ENCODE measurements at regions of chr10 and their contacts with region 1.

Region 1: GRCh38 chr10:21989453-21990154 is 13.9 kb downstream of the DNAJC1 start:
- DNase-seq: peak; percentile 52
- ATAC-seq: peak; percentile 99
- H3K4me3 ChIP-seq: no peak overlapping the region
- H3K27ac ChIP-seq: no peak overlapping the region
- H3K4me1 ChIP-seq: no peaks in the 10 kb centered on the region
- H3K27me3 ChIP-seq: no peaks in the 10 kb centered on the region
- CTCF ChIP-seq: peak; percentile 50 to 71 (median 71); a peak in 5 of 6 replicates
- POLR2A ChIP-seq: no peak
- RAD21 ChIP-seq: peak; percentile 69

Region 2: GRCh38 chr10:21488246-21488956 is 501.2 kb before region 1 on chr10:
- CTCF ChIA-PET with region 1: no interaction called
- POLR2A ChIA-PET with region 1: no interaction called
- RAD21 ChIA-PET with region 1: no interaction called
- intact Hi-C with region 1: no loop called
- DNase-seq: no peak
- ATAC-seq: no peak
- H3K4me3 ChIP-seq: no peak overlapping the region
- H3K27ac ChIP-seq: no peak overlapping the region
- H3K4me1 ChIP-seq: no peaks in the 10 kb centered on the region
- H3K27me3 ChIP-seq: no peaks in the 10 kb centered on the region
- CTCF ChIP-seq: no peak
- POLR2A ChIP-seq: no peak
- RAD21 ChIP-seq: no peak

Region 3: DNA sequence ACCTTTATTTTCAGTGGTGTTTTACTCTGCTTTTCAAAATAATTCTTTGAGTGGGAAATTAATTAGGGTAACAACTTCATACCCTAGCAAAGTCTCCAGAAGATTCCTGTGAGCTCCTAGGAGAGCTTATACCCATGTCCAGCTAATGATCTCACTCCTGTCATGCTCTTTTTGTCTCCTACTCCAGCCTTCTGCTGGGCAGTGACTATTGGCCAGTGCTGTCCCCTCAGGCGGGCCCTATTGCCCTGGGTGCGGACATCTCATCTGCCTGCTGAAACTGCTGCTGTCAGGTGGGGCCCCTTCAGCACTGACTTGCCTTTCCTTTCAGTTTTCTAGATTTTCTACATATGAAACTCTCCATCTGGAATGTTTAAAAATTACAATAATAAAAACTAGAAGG is 147.9 kb after region 1 on chr10:
- CTCF ChIA-PET with region 1: no interaction called
- POLR2A ChIA-PET with region 1: no interaction called
- RAD21 ChIA-PET with region 1: no interaction called
- intact Hi-C with region 1: no loop called
- DNase-seq: no peak
- ATAC-seq: no peak
- H3K4me3 ChIP-seq: no peak overlapping the region
- H3K27ac ChIP-seq: no peak overlapping the region
- H3K4me1 ChIP-seq: no peaks in the 10 kb centered on the region
- H3K27me3 ChIP-seq: no peaks in the 10 kb centered on the region
- CTCF ChIP-seq: no peak
- POLR2A ChIP-seq: no peak
- RAD21 ChIP-seq: no peak

Region 4: DNA sequence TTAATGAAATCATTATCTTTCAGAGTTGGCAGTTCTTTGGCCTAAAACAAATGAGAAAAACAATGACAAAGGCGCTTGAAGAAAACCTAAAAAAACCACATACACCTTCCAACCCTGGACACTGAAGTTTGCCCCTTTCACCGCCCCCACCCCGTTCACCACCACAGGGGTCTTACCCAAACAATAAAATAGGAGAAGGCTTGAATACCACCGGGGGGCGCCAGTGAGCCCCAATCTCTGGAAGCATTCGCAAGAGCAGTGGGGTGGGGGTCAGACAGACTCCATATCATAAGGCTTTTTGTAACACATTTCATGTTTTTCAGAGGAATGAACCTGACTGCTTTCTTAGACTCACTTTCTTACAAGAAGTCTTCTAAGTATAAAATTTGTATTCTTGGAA is 561.1 kb after region 1 on chr10:
- CTCF ChIA-PET with region 1: interaction called, 5 read pairs
- POLR2A ChIA-PET with region 1: no interaction called
- RAD21 ChIA-PET with region 1: no interaction called
- intact Hi-C with region 1: loop called (anchors 10 kb)
- DNase-seq: peak; percentile 16
- ATAC-seq: peak; percentile 67
- H3K4me3 ChIP-seq: no peak overlapping the region
- H3K27ac ChIP-seq: no peak overlapping the region
- H3K4me1 ChIP-seq: no peaks in the 10 kb centered on the region
- H3K27me3 ChIP-seq: no peaks in the 10 kb centered on the region
- CTCF ChIP-seq: peak; percentile 34 to 84 (median 64); a peak in 5 of 6 replicates
- POLR2A ChIP-seq: no peak
- RAD21 ChIP-seq: peak; percentile 43

Region 5: DNA sequence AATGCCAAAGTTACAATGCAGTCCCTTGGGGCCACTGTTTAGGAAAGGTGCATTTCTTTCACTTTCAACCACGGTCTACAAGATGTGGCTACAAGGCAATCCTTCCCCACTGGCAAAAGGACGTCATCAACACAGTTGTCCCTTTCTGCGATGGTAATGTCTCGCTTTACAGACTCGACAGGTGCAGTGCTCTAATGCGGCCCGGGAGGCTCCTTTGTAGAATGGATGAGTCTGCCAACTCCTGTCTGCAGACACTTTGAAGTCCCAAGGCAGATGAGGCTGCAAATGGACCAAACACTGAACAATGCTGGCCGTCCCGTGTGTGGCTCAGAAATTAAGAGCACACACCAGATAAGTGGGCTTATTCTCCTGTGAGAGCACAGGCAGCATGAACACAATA is 591.1 kb after region 1 on chr10:
- CTCF ChIA-PET with region 1: interaction called, 5 read pairs
- POLR2A ChIA-PET with region 1: no interaction called
- RAD21 ChIA-PET with region 1: no interaction called
- intact Hi-C with region 1: loop called (anchors 10 kb)
- DNase-seq: no peak
- ATAC-seq: no peak
- H3K4me3 ChIP-seq: no peak overlapping the region
- H3K27ac ChIP-seq: no peak overlapping the region
- H3K4me1 ChIP-seq: no peaks in the 10 kb centered on the region
- H3K27me3 ChIP-seq: no peaks in the 10 kb centered on the region
- CTCF ChIP-seq: no peak
- POLR2A ChIP-seq: no peak
- RAD21 ChIP-seq: no peak

Region 6: GRCh38 chr10:23293145-23293724 is 1303.6 kb after region 1 on chr10:
- CTCF ChIA-PET with region 1: no interaction called
- POLR2A ChIA-PET with region 1: no interaction called
- RAD21 ChIA-PET with region 1: no interaction called
- intact Hi-C with region 1: loop called (anchors 5 kb)
- DNase-seq: peak; percentile 33
- ATAC-seq: peak; percentile 94
- H3K4me3 ChIP-seq: no peak overlapping the region
- H3K27ac ChIP-seq: no peak overlapping the region
- H3K4me1 ChIP-seq: no peaks in the 10 kb centered on the region
- H3K27me3 ChIP-seq: peaks cover 12% of the 10 kb centered on the region
- CTCF ChIP-seq: peak; percentile 60 to 68 (median 67)
- POLR2A ChIP-seq: no peak
- RAD21 ChIP-seq: peak; percentile 73